ENCODE measurements at regions of chr10 and their contacts with region 1.

Region 1: GRCh38 chr10:49783645-49784044 is 21.5 kb upstream of the OGDHL start:
- DNase-seq: no peak
- H3K4me3 ChIP-seq: no peak overlapping the region
- H3K27ac ChIP-seq: no peak overlapping the region
- H3K4me1 ChIP-seq: no peaks in the 10 kb centered on the region
- CTCF ChIP-seq: no peak; the same call in 1 of the 2 replicates

Region 2: GRCh38 chr10:49619613-49620012 is 164.0 kb before region 1 on chr10:
- CTCF ChIA-PET with region 1: no interaction called
- POLR2A ChIA-PET with region 1: no interaction called
- intact Hi-C with region 1: no loop called
- DNase-seq: no peak
- H3K4me3 ChIP-seq: no peak overlapping the region
- H3K27ac ChIP-seq: no peak overlapping the region
- H3K4me1 ChIP-seq: no peaks in the 10 kb centered on the region
- CTCF ChIP-seq: no peak

Region 3: GRCh38 chr10:49769692-49770091 is 14.0 kb before region 1 on chr10:
- CTCF ChIA-PET with region 1: no interaction called
- POLR2A ChIA-PET with region 1: interaction called, 10 read pairs
- intact Hi-C with region 1: no loop called
- DNase-seq: no peak
- H3K4me3 ChIP-seq: no peak overlapping the region
- H3K27ac ChIP-seq: no peak overlapping the region
- H3K4me1 ChIP-seq: peaks cover 23% of the 10 kb centered on the region
- CTCF ChIP-seq: no peak

Region 4: GRCh38 chr10:49844821-49845597 is 61.4 kb after region 1 on chr10:
- CTCF ChIA-PET with region 1: no interaction called
- POLR2A ChIA-PET with region 1: interaction called, 11 read pairs
- intact Hi-C with region 1: no loop called
- DNase-seq: no peak
- H3K4me3 ChIP-seq: no peak overlapping the region
- H3K27ac ChIP-seq: no peak overlapping the region
- H3K4me1 ChIP-seq: no peaks in the 10 kb centered on the region
- CTCF ChIP-seq: no peak

Region 5: DNA sequence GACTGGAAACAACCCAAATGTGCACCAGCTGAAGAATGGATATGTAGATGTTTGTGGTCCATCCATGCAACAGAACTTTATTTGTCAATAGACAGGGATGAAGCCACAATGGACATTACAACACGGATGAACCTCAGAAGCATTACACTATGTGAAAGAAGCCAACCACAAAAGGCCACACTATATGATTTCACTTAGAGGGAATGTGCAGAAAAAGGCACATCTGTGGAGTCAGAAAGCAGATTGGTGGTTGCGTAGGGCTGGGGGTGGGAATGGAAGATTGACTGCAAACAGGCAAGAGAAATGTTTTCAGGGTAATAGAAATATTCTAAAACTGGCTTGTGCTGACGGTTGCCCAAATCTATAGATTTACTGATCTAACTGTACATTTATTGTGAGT is 249.8 kb after region 1 on chr10:
- CTCF ChIA-PET with region 1: no interaction called
- POLR2A ChIA-PET with region 1: no interaction called
- intact Hi-C with region 1: no loop called
- DNase-seq: no peak
- H3K4me3 ChIP-seq: no peak overlapping the region
- H3K27ac ChIP-seq: no peak overlapping the region
- H3K4me1 ChIP-seq: no peaks in the 10 kb centered on the region
- CTCF ChIP-seq: no peak

Measured in OCI-LY7 (cell line).